H1 (cell line): ENCODE measurements at regions of chr3 and their contacts with region 1.

Region 1: DNA sequence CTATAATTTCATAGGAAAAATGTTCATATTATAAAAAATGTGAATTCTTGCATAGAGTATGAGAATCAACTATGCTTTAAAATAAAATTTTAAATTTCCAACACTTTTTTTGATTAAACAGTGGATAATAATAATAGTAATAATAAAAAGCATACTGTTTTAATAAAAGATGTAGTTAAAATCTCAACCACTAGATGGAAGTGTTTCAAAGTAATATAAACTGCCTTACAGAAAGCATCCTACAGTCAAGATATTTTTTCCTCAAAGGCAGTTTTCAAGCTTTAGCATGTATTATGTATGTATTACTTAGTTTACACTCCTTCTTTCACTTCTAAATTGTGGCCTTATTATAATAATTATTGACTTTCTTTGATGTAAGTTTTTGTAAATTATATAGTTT is 217.5 kb downstream of the CHL1 start:
- DNase-seq: no peak
- H3K4me3 ChIP-seq: no peak overlapping the region
- H3K27ac ChIP-seq: no peak overlapping the region
- H3K4me1 ChIP-seq: no peaks in the 10 kb centered on the region
- H3K27me3 ChIP-seq: peaks cover 0 to 8% (median 1%) of the 10 kb centered on the region in 4 experiments; a peak in 3 of 7 replicates
- CTCF ChIP-seq: no peak; a peak in 1 of 4 replicates
- EP300 ChIP-seq: no peak
- POLR2A ChIP-seq: no peak
- RAD21 ChIP-seq: peak in 1 of 2 experiments; percentile 34; a peak in 2 of 4 replicates

Region 2: GRCh38 chr3:403826-404225 is 10.2 kb before region 1 on chr3:
- CTCF ChIA-PET with region 1: interaction called, 11 read pairs
- POLR2A ChIA-PET with region 1: no interaction called
- DNase-seq: no peak
- H3K4me3 ChIP-seq: no peak overlapping the region
- H3K27ac ChIP-seq: no peak overlapping the region
- H3K4me1 ChIP-seq: no peaks in the 10 kb centered on the region
- H3K27me3 ChIP-seq: no peaks in the 10 kb centered on the region
- CTCF ChIP-seq: no peak
- EP300 ChIP-seq: no peak
- POLR2A ChIP-seq: no peak
- RAD21 ChIP-seq: no peak